ENCODE measurements at regions of chr6 and their contacts with region 1.

Region 1: DNA sequence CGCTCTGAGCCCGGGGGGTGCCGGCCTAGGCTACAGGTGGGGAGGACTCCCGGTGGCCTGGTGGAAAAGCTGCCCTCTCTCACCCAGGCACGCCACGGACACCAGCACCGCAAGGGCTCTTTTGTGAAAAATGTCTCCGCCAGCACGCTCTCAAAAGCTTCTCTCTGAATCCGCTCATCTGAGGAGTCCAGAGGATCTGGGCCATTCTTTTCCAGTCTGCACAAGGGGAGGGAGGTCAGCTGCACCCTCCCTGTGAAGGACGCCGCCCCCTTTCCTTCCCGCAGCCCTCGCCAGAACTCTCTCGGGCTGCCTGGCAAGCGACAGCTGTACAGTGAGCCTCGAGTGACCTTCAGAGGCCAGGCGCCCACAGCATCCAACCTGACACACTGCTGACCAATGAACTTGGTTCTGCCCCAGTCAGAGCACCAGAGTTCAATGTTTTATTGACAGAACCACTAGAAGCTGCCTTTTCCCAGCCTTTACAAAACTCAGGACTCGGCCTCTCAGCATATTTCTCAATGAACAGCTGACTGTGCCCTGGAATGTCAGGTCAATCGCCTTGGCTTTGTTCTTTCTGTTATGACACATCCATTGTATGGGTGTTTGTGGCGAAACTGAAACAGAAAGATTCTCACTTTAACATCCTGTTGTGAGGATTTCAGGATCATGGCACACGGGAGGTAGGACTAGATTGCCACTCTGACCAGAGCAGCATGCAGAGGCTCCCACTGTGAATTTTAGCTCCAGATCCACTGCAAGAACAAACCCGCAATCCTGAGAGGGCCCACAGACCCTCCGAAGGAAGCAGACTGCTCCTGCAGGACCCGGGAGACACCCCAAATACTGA is 26.7 kb downstream of the SERPINB9 start:
- DNase-seq: no peak
- ATAC-seq: peak; percentile 15 to 24
- H3K4me3 Mint-ChIP-seq: peak overlapping the region; percentile 72 to 94 (median 89)
- H3K27ac Mint-ChIP-seq: peak overlapping the region; percentile 91 to 99 (median 96)
- H3K4me1 Mint-ChIP-seq: peaks cover 44 to 88% (median 81%) of the 10 kb centered on the region in 4 donors
- H3K27me3 Mint-ChIP-seq: no peaks in the 10 kb centered on the region

Region 2: GRCh38 chr6:2891768-2892170 is 15.3 kb after region 1 on chr6:
- POLR2A ChIA-PET with region 1: interaction called, 12 read pairs
- DNase-seq: peak in 9 of 10 donors; percentile 40 to 81 (median 71)
- ATAC-seq: peak; percentile 82 to 95
- H3K4me3 Mint-ChIP-seq: peak overlapping the region; percentile 9 to 76 (median 55)
- H3K27ac Mint-ChIP-seq: peak overlapping the region; percentile 83 to 95 (median 92)
- H3K4me1 Mint-ChIP-seq: peaks cover 29 to 60% (median 57%) of the 10 kb centered on the region in 4 donors
- H3K27me3 Mint-ChIP-seq: no peaks in the 10 kb centered on the region

Region 3: DNA sequence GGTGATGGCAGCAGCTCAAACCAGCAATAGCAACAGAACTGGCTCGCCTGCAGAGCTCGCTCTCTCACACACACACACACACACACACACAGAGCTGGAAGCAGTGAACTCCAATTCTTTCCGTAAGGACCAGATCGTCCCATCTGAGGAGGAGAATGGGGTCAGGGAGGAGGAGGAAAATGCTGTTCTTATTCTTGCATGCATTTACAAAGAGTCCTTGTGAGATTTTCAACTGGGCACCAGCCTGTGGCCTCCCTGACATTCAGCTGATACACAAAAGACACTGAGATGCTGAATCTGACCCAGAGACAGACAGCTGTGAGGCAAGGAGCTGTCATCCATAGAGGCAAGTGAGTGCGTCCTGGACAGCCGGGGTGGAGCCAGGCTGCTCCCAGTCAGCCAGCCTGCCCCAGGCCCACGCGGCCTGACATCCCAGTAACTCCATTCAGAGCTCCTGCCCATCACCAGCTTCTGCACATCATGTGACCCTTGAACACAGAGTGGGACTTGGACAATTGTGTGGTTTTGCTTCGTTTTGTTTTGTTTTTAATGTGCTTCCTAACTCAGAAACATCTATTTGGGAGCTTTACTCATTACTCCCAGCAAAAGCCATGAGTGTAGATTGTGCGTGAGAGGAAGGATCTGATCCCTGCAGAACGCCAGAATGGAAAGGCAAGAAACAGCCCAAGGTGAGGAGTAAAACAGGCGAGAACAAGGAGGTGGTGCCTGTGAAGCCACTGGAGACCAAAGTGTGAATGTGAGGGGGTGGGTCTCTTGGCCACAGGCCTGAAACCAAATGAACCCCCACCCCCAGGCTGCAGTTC is 24.6 kb after region 1 on chr6:
- POLR2A ChIA-PET with region 1: interaction called, 56 read pairs
- DNase-seq: peak in 1 of 10 donors; percentile 12
- ATAC-seq: no peak
- H3K4me3 Mint-ChIP-seq: peak overlapping the region; percentile 97 to 100 (median 100)
- H3K27ac Mint-ChIP-seq: peak overlapping the region; percentile 91 to 98 (median 98)
- H3K4me1 Mint-ChIP-seq: peaks cover 40 to 71% (median 62%) of the 10 kb centered on the region in 4 donors
- H3K27me3 Mint-ChIP-seq: no peaks in the 10 kb centered on the region